T-cell (primary cell): ENCODE measurements at regions of chr14 and their contacts with region 1.

Region 1: GRCh38 chr14:23301288-23301968 is 1.2 kb downstream of the PPP1R3E start:
- DNase-seq: peak; percentile 91 to 99 (median 96)
- ATAC-seq: peak; percentile 75 to 82 (median 76)
- H3K4me3 ChIP-seq: peak overlapping the region; percentile 74 to 85
- H3K4me3 Mint-ChIP-seq: peak overlapping the region; percentile 92 to 100 (median 92)
- H3K27ac ChIP-seq: peak overlapping the region; percentile 96
- H3K27ac Mint-ChIP-seq: peak overlapping the region; percentile 93 to 94
- H3K4me1 ChIP-seq: peaks cover 9 to 26% of the 10 kb centered on the region in 2 experiments
- H3K4me1 Mint-ChIP-seq: peaks cover 15 to 34% (median 30%) of the 10 kb centered on the region in 3 donors
- H3K27me3 ChIP-seq: peaks cover 0 to 10% of the 10 kb centered on the region in 2 experiments
- H3K27me3 Mint-ChIP-seq: peaks cover 11 to 12% of the 10 kb centered on the region in 2 donors

Region 2: DNA sequence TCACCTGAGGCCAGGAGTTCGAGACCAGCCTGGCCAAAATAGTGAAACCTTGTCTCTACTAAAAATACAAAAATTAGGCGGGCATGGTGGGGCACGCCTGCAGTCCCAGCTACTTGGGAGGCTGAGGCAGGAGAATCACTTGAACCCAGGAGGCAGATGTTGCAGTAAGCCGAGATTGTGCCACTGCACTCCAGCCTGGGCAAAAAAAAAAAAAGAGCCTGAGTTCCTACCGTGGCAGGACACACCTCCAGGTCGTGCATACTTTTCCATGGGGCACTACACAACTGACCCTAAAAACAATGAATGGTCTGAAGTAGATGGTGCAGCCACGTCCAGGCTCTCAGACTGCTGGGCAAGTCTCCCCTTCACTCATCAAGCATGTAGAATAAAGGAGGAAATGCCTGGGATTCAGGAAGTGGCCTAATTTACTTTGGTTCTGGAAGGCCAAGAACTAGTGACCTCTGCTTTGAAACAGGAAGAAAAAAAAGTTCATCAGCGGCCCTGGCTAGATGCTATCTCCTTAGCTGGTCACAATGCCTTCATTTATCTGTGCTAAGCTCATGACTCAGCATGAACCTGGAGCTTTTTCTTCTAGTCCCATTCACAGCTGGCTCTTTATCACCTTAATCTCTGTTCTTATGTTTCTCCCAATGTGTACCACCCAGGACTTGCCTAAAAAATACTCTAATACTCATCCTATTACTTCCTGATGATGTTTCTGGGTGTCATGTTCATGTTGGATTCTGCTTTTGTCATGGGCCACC is 601.4 kb before region 1 on chr14:
- CTCF ChIA-PET with region 1: no interaction called
- POLR2A ChIA-PET with region 1: no interaction called
- DNase-seq: no peak
- ATAC-seq: no peak
- H3K4me3 ChIP-seq: no peak overlapping the region
- H3K4me3 Mint-ChIP-seq: no peak overlapping the region
- H3K27ac ChIP-seq: no peak overlapping the region
- H3K27ac Mint-ChIP-seq: no peak overlapping the region
- H3K4me1 ChIP-seq: no peaks in the 10 kb centered on the region
- H3K4me1 Mint-ChIP-seq: no peaks in the 10 kb centered on the region
- H3K27me3 ChIP-seq: peaks cover 4 to 31% of the 10 kb centered on the region in 2 experiments
- H3K27me3 Mint-ChIP-seq: peaks cover 27 to 48% of the 10 kb centered on the region in 2 donors

Region 3: DNA sequence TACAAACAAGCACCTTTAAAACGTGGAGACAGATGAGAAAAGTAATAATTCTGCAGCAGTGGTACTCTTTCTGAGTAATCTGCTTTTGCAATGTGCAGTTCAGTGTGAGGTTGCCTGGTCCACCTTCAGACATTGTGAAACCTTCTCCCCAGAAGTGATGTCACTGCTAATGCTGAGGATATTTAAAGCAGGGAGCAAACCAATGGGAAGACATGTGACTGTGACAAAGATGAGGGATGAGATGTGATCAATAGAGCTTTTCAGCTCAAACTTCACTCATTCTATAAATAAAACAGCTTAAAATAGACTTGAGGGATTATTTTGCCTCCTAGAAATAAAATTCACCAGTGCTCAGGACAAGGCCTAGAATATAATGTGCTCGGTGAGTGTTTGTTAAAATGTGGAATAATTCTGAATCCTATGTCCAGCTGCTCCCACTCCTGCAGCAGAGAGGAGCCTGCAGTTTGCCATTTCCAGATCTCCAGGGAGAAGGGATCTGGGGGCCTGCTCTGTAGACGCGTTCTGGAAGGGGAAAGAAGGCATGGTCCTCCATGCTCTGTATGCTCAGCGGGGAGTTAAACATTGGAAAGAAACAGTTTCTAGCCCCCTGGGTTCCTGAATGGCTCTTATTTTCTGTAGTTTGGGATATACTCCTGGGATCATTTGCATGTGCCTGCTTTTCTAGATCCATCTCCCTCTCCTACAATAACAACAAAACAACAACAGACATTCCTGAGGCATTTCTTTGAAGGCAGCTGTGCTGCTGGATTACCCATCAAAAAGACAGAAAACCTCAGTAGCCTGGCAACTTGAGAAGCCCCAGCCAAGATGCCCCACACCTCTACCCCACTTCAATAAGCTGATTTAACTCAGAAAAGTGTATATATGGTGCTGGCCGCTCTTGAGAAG is 126.9 kb before region 1 on chr14:
- CTCF ChIA-PET with region 1: no interaction called
- POLR2A ChIA-PET with region 1: no interaction called
- DNase-seq: no peak
- ATAC-seq: no peak
- H3K4me3 ChIP-seq: no peak overlapping the region
- H3K4me3 Mint-ChIP-seq: no peak overlapping the region
- H3K27ac ChIP-seq: no peak overlapping the region
- H3K27ac Mint-ChIP-seq: no peak overlapping the region
- H3K4me1 ChIP-seq: peaks cover 5 to 6% of the 10 kb centered on the region in 2 experiments
- H3K4me1 Mint-ChIP-seq: peaks cover 14 to 55% (median 47%) of the 10 kb centered on the region in 3 donors
- H3K27me3 ChIP-seq: peaks cover 0 to 14% of the 10 kb centered on the region in 2 experiments
- H3K27me3 Mint-ChIP-seq: peaks cover 10 to 27% of the 10 kb centered on the region in 2 donors

Region 4: GRCh38 chr14:23286020-23286905 is 15.2 kb before region 1 on chr14 and contains the start of gene HOMEZ:
- CTCF ChIA-PET with region 1: interaction called, 3 to 11 read pairs
- POLR2A ChIA-PET with region 1: interaction called, 7 to 11 read pairs
- DNase-seq: peak; percentile 91 to 98 (median 95)
- ATAC-seq: peak; percentile 97 to 99 (median 98)
- H3K4me3 ChIP-seq: peak within 1 kb of the TSS; percentile 61 to 83
- H3K4me3 Mint-ChIP-seq: peak within 1 kb of the TSS; percentile 94 to 97 (median 96)
- H3K27ac ChIP-seq: peak within 1 kb of the TSS; percentile 67
- H3K27ac Mint-ChIP-seq: peak within 1 kb of the TSS; percentile 94 to 98
- H3K4me1 ChIP-seq: peaks cover 9 to 14% of the 10 kb centered on the region in 2 experiments
- H3K4me1 Mint-ChIP-seq: peaks cover 29 to 37% (median 30%) of the 10 kb centered on the region in 3 donors
- H3K27me3 ChIP-seq: no peaks in the 10 kb centered on the region
- H3K27me3 Mint-ChIP-seq: no peaks in the 10 kb centered on the region
- total RNA-seq, gene HOMEZ: 6.2 to 17.5 (median 15.1) TPM

Region 5: DNA sequence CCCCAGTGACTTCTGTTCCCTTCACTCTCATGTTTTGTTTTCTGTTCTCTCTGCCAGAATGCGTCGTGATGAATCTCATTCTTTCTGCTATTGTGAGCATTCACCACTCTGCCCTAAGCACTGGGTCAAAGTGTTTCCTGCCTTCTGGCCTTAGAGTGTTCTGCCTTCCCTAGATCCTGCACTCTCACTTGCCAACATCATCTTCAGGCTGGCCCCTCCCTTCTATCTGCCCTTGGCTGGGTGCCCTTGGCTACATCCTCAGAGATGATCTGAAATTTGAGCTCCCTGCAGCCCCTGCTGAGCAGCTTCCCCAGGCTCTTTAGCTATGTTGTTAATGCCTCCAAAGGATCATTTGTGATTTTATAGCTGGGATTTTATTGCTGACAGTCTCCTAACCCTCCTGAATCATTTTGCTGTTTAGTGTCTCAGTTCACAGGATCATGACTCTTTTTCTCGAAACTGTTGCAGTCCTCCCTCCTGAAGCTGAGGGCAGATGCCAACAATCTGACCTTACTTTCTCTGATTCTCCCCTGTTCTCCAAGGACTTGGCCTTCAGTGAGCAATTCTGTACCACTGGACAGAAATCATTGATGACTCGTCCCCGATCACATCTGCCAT is 339.2 kb after region 1 on chr14:
- CTCF ChIA-PET with region 1: no interaction called
- POLR2A ChIA-PET with region 1: no interaction called
- DNase-seq: no peak
- ATAC-seq: no peak
- H3K4me3 ChIP-seq: no peak overlapping the region
- H3K4me3 Mint-ChIP-seq: no peak overlapping the region
- H3K27ac ChIP-seq: no peak overlapping the region
- H3K27ac Mint-ChIP-seq: no peak overlapping the region
- H3K4me1 ChIP-seq: no peaks in the 10 kb centered on the region
- H3K4me1 Mint-ChIP-seq: no peaks in the 10 kb centered on the region
- H3K27me3 ChIP-seq: peaks cover 0 to 3% of the 10 kb centered on the region in 2 experiments
- H3K27me3 Mint-ChIP-seq: no peaks in the 10 kb centered on the region